Heart right ventricle (tissue), 16 donors: ENCODE measurements at regions of chr10 and their contacts with region 1.

Region 1: DNA sequence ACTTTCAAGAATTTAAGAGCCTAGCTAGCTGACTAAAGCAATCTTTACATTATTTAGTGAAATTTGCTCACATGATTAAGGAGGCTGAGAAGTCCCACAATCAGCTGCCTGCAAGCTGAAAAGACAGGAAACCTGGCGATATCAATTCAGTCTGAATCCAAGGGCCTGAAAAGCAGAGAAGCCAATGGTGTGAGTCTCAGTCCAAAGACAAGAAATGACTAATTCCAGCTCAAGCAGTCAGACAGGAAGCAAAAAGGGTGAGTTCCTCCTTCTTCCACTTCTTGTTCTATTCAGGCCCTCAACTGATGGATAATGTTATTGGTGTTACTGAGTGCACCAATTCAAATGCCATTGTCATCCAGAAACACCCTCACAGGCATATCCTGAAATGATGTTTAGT is 1231.6 kb upstream of the CELF2 start:
- DNase-seq: no peak
- ATAC-seq: no peak
- H3K4me3 ChIP-seq: no peak overlapping the region
- H3K27ac ChIP-seq: no peak overlapping the region
- H3K4me1 ChIP-seq: no peaks in the 10 kb centered on the region
- H3K27me3 ChIP-seq: no peaks in the 10 kb centered on the region
- CTCF ChIP-seq: no peak

Region 2: DNA sequence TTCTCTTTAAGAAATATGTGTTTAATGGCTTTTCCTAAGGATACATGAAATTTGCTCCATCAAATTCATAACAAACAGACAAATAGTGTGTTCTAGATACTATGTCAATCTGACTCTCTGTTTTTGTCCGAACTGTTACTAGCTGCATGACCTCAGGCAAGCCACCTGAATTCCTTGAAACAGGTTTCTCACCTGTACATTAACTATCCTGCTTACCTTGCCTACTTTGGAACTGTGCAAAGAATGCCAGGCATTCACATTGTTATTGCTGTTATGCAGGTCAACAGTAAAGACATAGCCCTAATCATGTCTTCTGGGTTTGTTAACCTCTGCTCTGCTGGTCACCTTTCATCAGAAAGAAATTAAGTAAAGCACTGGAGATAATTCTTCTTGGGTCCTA is 52.3 kb before region 1 on chr10:
- intact Hi-C with region 1: loop called in 1 of 10 experiments (anchors 10 kb)
- DNase-seq: no peak
- ATAC-seq: no peak
- H3K4me3 ChIP-seq: no peak overlapping the region
- H3K27ac ChIP-seq: no peak overlapping the region
- H3K4me1 ChIP-seq: no peaks in the 10 kb centered on the region
- H3K27me3 ChIP-seq: no peaks in the 10 kb centered on the region
- CTCF ChIP-seq: no peak

Region 3: GRCh38 chr10:9759596-9759995 is 26.5 kb before region 1 on chr10:
- intact Hi-C with region 1: no loop called
- DNase-seq: no peak
- ATAC-seq: no peak
- H3K4me3 ChIP-seq: no peak overlapping the region
- H3K27ac ChIP-seq: no peak overlapping the region
- H3K4me1 ChIP-seq: no peaks in the 10 kb centered on the region
- H3K27me3 ChIP-seq: no peaks in the 10 kb centered on the region
- CTCF ChIP-seq: no peak